Body of pancreas (tissue), 4 donors: ENCODE measurements at regions of chr2 and their contacts with region 1.

Region 1: GRCh38 chr2:132549935-132550670 is 119.9 kb downstream of the LYPD1 start:
- DNase-seq: no peak
- ATAC-seq: no peak
- H3K4me3 ChIP-seq: no peak overlapping the region
- H3K27ac ChIP-seq: no peak overlapping the region
- H3K4me1 ChIP-seq: no peaks in the 10 kb centered on the region
- H3K27me3 ChIP-seq: no peaks in the 10 kb centered on the region
- CTCF ChIP-seq: no peak
- POLR2A ChIP-seq: no peak

Region 2: GRCh38 chr2:133166031-133166430 is 615.9 kb after region 1 on chr2:
- intact Hi-C with region 1: loop called (anchors 5 kb)
- DNase-seq: no peak
- ATAC-seq: no peak
- H3K4me3 ChIP-seq: no peak overlapping the region
- H3K27ac ChIP-seq: no peak overlapping the region
- H3K4me1 ChIP-seq: no peaks in the 10 kb centered on the region
- H3K27me3 ChIP-seq: no peaks in the 10 kb centered on the region
- CTCF ChIP-seq: no peak
- POLR2A ChIP-seq: no peak